Left colon (tissue), 2 donors: ENCODE measurements at regions of chr3 and their contacts with region 1.

Region 1: DNA sequence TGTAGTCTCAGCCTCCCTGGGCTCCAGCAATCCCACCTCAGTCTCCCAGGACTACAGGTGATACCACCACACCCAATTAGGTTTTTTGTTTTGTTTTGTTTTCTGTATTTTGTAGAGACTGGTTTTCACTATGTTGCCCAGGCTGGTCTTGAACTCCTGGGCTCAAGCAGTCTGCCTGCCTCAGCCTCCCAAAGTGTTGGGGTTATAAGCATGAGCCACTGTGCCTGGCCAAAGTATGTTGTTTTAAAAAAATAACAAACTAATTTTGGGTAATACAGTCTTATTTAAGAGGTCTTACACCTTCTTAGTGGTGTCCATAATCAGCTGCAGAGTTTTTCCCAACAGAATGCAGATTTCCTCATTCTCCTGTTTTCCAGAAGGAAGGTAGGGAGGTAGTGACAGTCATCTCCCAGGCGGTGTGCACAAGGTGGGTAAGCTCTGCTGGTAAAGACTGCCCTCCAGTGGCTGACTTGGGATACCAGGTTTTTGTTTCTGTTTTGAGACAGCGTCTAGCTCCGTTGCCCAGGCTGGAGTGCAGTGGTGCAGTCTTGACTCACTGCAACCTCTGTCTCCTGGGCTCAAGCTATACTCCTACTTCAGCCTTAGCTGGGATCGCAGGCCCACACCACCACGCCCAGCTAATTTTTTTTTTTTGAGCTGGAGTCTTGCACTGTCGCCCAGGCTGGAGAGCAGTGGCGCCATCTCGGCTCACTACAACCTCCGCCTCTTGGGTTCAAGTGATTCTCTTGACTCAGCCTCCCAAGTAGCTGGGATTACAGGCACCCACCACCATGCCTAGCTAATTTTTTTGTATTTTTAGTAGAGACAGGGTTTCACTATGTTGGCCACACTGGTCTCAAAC is 58.4 kb downstream of the MAP6D1 start:
- DNase-seq: peak; percentile 73 to 83
- ATAC-seq: peak; percentile 92

Region 2: DNA sequence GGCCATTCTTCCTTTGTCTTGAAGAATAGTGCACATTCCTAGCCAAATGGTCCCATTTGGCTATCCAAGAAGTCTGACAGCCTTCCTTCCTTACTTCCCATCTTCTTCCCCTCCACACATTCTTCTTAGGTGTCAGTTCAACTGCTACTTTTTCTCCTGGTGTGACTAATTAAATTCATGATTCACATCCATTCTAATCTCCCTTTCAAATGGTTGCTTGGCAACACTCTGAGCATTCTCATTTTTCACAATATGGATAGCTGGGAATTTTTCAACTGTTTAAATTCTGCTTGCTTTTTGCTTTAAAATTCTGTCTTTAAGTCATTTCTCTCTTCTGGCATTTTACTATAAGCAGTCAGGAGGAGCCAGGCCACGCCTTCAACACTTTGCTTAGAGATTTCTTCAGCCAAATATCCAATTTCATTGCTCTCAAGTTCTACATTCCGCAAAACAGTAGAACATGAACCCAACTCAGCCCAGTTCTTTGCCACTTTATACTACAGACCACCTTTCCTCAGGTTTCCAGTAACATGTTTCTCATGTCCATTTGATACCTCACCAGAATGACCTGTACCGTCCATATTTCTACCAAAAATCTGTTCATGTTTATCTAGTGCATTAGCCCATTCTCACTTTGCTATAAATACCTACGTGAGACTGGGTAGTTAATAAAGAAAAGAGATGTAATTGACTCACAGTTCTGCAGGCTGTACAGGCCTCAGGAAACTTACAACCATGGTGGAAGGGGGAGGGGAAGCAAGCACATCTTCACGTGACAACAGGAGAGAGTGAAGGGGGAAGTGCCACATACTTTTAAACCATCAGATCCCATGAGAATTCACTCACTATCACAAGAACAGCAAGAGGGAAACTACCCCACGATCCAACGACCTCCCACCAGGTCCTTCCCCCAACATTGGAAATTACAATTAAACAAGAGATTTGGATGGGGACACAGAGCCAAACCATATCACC is 306.6 kb before region 1 on chr3:
- intact Hi-C with region 1: loop called in 1 of 2 experiments (anchors 10 kb)
- DNase-seq: no peak
- ATAC-seq: no peak

Region 3: GRCh38 chr3:183650554-183650953 is 116.4 kb before region 1 on chr3:
- intact Hi-C with region 1: no loop called
- DNase-seq: no peak
- ATAC-seq: no peak